Lower leg skin (tissue), 4 donors: ENCODE measurements at regions of chr2 and their contacts with region 1.

Region 1: DNA sequence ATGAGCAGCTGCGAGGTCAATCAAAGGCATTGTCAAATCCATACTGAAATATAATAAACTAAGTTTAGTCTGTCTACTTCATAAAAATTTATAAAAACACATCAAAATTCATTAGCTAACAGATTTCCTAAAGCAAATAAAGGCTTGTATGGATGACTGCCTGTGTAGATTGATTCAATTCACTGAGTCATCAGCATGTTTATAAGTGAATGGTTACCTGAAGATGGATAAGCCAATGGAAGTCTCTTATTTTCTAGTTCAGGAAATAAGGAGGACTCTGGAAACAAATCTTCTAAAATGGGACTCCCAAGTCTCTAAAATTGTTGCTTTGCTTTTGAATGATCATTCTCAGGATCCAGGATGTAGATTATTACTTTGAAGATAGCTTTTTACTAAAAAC is 57.0 kb upstream of the HNRNPA3 start:
- DNase-seq: no peak
- H3K4me3 ChIP-seq: no peak overlapping the region
- CTCF ChIP-seq: no peak
- POLR2A ChIP-seq: no peak

Region 2: DNA sequence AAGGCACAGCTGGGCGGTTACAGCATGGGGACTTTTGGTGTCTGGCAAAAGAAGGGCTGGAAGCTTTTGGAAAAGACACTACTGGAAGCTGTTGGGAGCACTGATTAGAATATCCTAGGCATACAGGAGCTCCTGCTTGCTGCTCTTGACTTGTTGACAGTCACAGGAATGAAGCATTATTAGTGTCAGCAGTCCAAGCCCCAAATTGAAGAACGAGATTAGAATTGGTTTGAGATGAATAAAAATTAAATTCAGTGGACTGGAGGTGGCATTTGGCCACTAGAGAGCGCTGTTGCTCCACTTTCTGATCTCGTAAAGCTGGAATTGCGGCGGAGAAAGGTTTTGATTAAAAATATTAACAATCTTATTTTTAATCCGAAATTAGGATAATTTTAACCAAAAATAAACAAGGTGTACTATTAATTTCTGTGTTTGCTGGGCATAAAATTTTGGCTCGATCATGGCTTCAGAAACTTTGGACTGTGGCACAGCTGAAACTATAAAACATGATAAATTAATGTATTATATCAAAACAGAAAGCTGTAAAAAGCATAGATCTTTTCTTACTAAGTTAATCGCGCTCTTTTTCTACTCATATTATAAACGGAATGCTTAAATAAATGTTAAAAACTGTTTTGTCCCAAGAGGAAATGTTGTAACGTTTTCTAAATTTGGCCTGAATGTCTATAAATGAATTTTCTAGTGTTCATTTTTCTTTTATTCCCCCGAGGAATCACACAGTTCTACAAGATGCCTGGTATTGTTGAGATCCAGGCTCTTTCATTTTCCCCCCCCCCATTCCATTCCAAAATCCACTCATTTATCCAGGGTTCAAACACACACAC is 1028.5 kb before region 1 on chr2:
- intact Hi-C with region 1: loop called (anchors 10 kb)
- DNase-seq: peak; percentile 63 to 95
- H3K4me3 ChIP-seq: no peak overlapping the region
- CTCF ChIP-seq: peak in 2 of 3 donors; percentile 3 to 61
- POLR2A ChIP-seq: no peak

Region 3: DNA sequence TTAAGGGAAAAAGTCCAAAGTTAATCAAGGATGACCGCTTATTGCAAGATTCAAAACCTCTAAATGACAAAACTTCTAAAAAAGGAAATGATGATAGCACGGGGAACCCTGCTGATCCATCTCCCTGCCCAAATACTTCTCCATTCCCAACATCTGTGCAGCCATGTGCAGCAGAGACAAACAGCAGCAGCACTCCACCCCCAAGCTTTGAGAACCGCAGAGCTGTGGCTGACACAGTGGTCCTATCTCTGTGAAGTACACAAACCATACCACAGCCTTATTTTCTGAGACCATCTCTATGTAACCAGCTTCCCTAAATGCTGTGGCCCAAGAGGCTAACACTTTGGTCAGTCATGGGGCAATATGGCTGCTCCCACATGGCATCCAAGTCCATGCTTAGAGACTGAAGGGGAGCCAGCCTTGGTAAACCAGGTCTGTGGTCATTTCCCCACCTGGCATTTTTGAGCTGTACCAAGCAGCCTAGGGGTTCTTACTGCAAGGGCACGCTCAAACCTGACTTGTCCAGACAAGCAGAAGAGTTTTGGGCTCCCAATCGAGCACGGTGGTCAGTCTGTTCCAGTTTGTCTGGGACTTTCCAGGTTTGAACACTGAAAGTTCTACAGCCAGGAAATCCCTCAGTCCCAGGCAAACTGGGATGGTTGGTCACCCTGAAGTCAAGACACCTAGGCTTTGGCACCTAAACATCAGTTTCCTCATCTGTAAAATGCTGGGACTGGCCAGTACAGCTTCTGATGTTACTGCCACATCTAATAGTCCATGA is 126.0 kb after region 1 on chr2:
- intact Hi-C with region 1: no loop called
- DNase-seq: no peak
- H3K4me3 ChIP-seq: no peak overlapping the region
- CTCF ChIP-seq: no peak
- POLR2A ChIP-seq: no peak

Region 4: DNA sequence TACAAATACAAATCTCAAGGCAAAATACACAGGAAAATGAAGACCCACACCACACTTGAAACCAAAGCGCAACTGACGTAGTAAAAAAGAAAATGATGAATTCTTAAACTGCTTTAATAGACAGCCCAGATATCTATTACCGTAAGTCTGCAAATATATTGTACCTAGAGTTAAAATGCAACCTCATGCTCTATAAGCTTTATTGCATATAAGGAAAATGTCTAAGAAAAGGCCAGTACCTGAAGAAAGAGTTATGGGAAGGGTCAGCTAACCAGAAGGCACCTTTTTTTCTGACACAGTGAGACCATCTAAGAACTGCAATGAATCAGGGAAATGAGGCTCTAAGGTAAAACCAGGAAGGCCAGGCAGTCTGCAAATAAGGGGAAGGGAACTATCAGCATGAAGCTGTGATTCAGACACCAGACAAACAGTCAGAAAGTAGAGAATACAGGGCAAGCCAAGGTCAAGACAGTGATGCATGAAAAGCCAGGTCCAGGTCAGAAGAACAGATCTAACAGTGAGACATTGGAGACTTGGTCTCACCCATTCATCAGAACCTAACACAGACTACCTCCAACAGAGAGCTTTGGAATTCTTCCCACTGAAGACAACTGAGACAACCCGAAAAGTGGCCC is 870.0 kb after region 1 on chr2:
- intact Hi-C with region 1: no loop called
- DNase-seq: no peak
- H3K4me3 ChIP-seq: no peak overlapping the region
- CTCF ChIP-seq: no peak
- POLR2A ChIP-seq: no peak